IMR-90 (cell line): ENCODE measurements at regions of chr1 and their contacts with region 1.

Region 1: DNA sequence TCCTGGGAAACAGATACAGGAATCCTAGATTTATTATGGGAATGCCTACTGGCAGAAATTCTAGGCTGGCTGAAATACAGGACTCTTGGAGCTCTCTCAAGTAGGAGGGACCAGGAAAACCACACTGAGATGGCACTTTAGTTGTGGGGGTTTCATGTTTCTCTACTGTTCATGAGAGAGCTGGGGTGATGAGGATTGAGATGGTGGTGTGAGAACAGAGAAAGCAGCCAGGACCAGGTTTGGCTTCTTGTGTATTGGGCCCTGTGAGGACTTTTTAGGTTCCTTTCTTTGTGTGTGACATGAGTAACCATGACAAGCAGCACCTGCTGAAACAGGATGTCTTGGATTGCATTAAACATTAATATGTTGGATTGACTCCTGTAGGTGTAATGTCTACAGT is 4.9 kb downstream of the ARID1A start:
- DNase-seq: peak; percentile 60
- ATAC-seq: no peak
- H3K4me3 ChIP-seq: peak overlapping the region; percentile 6; the same call in 1 of the 2 replicates
- H3K27ac ChIP-seq: no peak overlapping the region
- H3K4me1 ChIP-seq: peaks cover 34% of the 10 kb centered on the region
- H3K27me3 ChIP-seq: no peaks in the 10 kb centered on the region
- CTCF ChIP-seq: no peak
- POLR2A ChIP-seq: no peak
- RAD21 ChIP-seq: no peak

Region 2: DNA sequence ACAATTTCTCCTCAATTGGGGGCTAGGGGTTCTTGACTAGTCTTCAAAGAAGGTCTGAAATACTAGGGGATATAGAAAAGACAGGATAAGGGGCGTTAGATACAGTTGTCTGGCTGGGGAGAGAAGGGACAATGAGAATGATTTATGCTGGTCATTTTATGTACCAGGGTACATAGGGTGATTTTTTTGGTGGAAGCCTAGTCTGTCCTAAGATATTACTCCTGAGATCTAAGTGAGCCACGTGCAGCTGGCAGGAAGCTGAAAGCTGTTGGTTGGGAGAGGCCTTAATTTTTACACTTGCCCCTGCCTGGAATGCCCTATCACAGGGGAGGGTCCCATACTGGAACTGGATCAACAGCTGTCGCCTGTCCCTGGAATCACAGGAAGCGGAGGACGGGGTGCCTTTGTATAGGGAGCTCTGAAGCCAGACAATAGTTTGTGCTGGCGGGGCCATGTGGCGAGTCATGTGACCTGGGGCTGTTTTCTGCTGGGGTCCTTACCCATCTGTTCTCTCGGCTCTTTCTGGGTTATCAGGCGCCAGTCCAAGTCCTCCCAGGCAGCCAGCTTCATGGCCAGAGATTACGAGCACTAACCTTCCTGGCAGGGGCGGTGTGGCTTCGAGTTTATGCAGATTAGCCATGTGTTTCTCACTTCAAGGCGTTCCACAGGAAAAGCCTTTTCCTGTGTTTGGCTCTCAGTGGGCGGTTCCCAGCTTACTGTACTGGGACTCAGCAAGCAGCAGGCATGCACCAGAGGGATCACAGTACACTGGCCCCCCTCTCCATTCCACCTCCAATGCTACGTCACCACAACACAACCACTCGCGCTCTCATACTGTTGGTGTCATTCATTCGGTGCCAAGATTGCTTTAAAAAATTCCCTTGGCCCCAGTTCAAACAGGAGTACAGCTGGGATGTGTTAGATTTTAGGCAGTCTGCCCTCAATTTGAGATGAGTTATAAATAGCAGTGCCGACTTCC is 22.6 kb after region 1 on chr1:
- CTCF ChIA-PET with region 1: interaction called, 3 read pairs
- POLR2A ChIA-PET with region 1: no interaction called
- dilution Hi-C with region 1: no loop called
- in situ Hi-C with region 1: no loop called
- intact Hi-C with region 1: loop called (anchors 2 kb)
- DNase-seq: peak; percentile 99
- ATAC-seq: peak; percentile 97
- H3K4me3 ChIP-seq: no peak overlapping the region
- H3K27ac ChIP-seq: no peak overlapping the region
- H3K4me1 ChIP-seq: peaks cover 25% of the 10 kb centered on the region
- H3K27me3 ChIP-seq: no peaks in the 10 kb centered on the region
- CTCF ChIP-seq: no peak
- POLR2A ChIP-seq: no peak; the same call in 1 of the 2 replicates
- RAD21 ChIP-seq: no peak

Region 3: DNA sequence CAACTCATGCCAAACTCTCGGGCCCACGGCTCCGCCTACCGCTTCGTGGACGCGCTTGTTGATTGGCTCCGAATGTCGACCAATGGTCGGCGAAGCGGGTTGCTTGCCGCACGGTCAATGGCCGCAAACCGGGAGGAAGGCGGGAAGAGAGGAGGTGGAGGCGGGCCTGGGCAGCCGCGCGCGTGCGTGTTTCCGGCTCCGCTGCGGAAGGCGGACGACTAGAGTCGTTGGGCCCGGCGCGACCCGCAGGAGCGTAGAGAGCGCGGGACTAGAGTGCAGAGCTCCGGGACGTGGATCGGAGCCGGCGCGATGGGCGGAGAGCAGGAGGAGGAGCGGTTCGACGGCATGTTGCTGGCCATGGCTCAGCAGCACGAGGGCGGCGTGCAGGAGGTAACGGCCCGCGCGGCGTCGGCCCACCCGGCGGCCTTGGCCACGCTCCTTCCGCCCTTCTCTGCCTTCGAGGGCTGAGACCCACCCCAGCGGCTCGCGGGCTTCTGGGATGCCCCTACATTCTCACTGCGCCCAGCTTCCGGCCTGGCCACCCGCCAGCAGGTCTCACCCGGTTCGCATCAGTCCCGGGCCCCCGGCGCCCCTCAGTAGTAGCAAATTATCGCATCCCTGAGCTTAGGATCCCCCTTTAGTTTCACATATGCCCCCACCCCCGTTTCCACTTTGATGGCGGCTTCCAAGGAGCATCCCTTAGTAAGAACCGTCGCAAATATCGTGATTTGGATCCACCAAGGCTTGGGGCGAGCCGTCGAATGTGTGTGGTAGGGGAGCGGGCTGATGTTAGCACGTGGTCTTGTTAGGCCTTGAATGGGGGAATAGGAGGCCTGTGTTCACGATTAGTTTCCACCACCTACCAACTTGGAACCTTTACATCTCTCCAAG is 221.1 kb after region 1 on chr1 and contains the start of gene NUDC:
- CTCF ChIA-PET with region 1: no interaction called
- POLR2A ChIA-PET with region 1: no interaction called
- dilution Hi-C with region 1: no loop called
- in situ Hi-C with region 1: no loop called
- intact Hi-C with region 1: no loop called
- DNase-seq: peak; percentile 96
- ATAC-seq: peak; percentile 99
- H3K4me3 ChIP-seq: peak within 1 kb of the TSS; percentile 71
- H3K27ac ChIP-seq: peak within 1 kb of the TSS; percentile 79
- H3K4me1 ChIP-seq: peaks cover 6% of the 10 kb centered on the region
- H3K27me3 ChIP-seq: no peaks in the 10 kb centered on the region
- CTCF ChIP-seq: no peak
- POLR2A ChIP-seq: peak; percentile 86
- RAD21 ChIP-seq: no peak
- total RNA-seq, gene NUDC: 34.8 and 50.0 TPM in 2 replicates

Region 4: GRCh38 chr1:27010989-27011764 is 310.5 kb after region 1 on chr1:
- CTCF ChIA-PET with region 1: no interaction called
- POLR2A ChIA-PET with region 1: no interaction called
- dilution Hi-C with region 1: no loop called
- in situ Hi-C with region 1: no loop called
- intact Hi-C with region 1: no loop called
- DNase-seq: peak; percentile 88
- ATAC-seq: peak; percentile 63
- H3K4me3 ChIP-seq: no peak overlapping the region
- H3K27ac ChIP-seq: peak overlapping the region; percentile 63
- H3K4me1 ChIP-seq: peaks cover 28% of the 10 kb centered on the region
- H3K27me3 ChIP-seq: no peaks in the 10 kb centered on the region
- CTCF ChIP-seq: no peak
- POLR2A ChIP-seq: no peak
- RAD21 ChIP-seq: no peak

Region 5: DNA sequence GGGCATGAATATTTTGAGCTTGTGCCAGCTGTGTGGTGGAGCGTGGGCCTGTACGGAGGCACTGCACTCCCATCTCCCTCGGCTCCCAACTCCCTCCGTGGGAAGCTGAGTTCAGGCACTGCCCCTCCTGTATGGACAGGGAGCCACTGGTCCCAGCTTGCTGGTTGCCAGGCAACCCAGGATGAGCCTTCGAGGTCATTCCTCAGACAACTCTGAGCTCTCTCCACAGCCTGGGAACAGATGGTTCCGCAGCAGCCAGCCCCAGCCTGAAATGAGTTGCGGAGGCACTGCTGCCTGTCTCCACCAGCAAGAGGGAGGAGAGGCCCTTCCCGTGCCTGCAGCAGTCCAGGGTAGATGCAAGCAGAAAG is 370.3 kb after region 1 on chr1:
- CTCF ChIA-PET with region 1: no interaction called
- POLR2A ChIA-PET with region 1: no interaction called
- dilution Hi-C with region 1: no loop called
- in situ Hi-C with region 1: no loop called
- intact Hi-C with region 1: no loop called
- DNase-seq: peak; percentile 38
- ATAC-seq: peak; percentile 72
- H3K4me3 ChIP-seq: no peak overlapping the region
- H3K27ac ChIP-seq: no peak overlapping the region
- H3K4me1 ChIP-seq: no peaks in the 10 kb centered on the region
- H3K27me3 ChIP-seq: peaks cover 19% of the 10 kb centered on the region
- CTCF ChIP-seq: no peak
- POLR2A ChIP-seq: no peak
- RAD21 ChIP-seq: no peak